OCI-LY7 (cell line): ENCODE measurements at regions of chr3 and their contacts with region 1.

Region 1: GRCh38 chr3:94069194-94069813 is 6.4 kb downstream of the NSUN3 start:
- DNase-seq: peak; percentile 41
- H3K4me3 ChIP-seq: no peak overlapping the region
- H3K27ac ChIP-seq: no peak overlapping the region
- H3K4me1 ChIP-seq: peaks cover 29% of the 10 kb centered on the region
- CTCF ChIP-seq: peak; percentile 90

Region 2: DNA sequence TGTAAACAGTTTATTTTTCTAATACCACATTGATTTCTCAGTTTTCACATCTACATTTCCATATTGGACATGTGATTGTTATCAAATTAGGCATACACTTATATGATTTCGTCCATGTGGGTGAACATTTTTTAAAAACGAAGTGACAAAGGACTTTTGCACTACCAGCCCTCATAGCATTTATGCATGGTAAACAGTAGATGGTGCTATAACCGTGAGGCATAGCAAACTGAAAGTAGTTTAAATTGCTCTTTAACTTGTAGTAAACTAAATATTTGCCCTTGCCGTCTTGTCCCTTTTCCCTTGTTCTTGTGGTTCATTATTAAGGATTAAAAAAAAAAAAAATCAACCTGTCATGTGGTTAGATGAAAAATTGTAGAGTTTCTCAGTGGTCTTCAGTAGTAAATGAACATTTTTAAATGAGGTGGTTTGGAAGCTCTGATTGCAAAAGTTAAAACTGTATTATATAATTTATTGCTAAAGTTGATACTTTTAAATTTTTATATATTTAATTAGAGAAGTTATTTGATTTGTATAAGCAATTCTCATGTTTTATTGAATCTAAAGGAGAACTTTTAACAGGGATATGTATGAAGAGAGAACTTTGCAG is 64.9 kb before region 1 on chr3:
- CTCF ChIA-PET with region 1: no interaction called
- POLR2A ChIA-PET with region 1: no interaction called
- intact Hi-C with region 1: loop called (anchors 1 kb)
- DNase-seq: peak; percentile 67
- H3K4me3 ChIP-seq: no peak overlapping the region
- H3K27ac ChIP-seq: no peak overlapping the region
- H3K4me1 ChIP-seq: no peaks in the 10 kb centered on the region
- CTCF ChIP-seq: peak; percentile 98

Region 3: DNA sequence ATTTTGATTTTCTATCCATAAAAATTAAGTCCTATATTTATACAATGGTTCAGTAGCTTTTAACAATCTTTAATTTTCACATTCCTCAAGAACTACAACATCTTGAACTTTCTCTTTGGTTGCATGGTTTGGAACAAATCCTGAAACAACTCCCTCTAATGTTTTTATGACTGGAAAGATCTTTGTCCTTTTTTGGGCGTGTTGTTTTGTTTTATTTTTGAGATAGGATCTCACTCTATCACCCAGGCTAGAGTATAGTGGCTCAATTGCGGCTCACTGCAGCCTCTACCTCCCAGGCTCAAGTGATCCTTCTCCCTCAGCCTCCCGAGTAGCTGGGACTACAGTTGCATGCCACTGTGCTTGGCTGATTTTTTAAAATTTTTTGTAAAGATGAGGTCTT is 44.9 kb before region 1 on chr3:
- CTCF ChIA-PET with region 1: no interaction called
- POLR2A ChIA-PET with region 1: no interaction called
- intact Hi-C with region 1: loop called (anchors 5 kb)
- DNase-seq: no peak
- H3K4me3 ChIP-seq: no peak overlapping the region
- H3K27ac ChIP-seq: no peak overlapping the region
- H3K4me1 ChIP-seq: no peaks in the 10 kb centered on the region
- CTCF ChIP-seq: no peak

Region 4: GRCh38 chr3:96012939-96013338 is 1943.6 kb after region 1 on chr3:
- CTCF ChIA-PET with region 1: no interaction called
- POLR2A ChIA-PET with region 1: interaction called, 10 read pairs
- intact Hi-C with region 1: no loop called
- DNase-seq: no peak
- H3K4me3 ChIP-seq: no peak overlapping the region
- H3K27ac ChIP-seq: no peak overlapping the region
- H3K4me1 ChIP-seq: no peaks in the 10 kb centered on the region
- CTCF ChIP-seq: no peak